Lower leg skin (tissue), 4 donors: ENCODE measurements at regions of chr7 and their contacts with region 1.

Region 1: DNA sequence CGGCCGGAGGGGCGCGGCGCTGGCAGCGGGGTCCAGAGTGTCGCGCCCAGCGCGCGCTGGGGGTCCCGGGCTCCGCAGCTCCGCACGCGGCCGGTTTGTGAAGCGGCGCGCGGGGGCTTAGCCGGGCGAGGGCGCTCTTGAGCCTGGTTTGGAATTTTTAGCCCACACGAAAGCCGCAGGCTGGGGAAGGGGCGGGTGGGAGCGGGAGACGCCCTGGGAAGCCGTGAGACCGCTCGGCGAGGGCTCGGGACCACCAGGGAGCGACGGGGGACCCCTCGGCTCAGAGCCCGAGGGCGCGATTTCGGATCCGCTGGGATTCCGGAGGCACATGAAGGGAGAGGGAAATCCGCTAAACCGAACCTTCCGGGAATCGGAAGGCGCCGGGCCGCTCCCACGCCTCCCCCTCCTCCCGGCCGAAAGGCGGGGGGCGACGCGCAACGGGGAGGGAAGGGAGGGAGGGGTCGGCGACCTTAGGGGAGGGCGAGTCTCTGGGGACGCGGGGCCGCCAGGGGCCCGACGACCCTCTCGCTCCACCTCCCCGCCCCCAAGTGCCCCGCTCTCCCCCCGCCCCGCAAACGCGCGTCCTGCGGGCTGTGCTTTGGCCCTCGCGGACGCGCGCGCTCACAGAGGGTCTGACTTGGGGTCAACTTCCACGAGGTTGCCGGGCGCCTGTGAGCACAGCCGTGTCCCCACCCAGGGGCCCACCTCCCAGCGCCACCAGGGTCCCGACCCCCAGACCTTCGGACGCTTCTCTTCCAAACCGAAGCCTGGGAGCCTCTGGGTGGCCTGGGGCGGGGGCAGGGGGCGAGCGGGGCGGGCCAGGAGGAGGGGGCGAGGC is 5.1 kb upstream of the ELFN1 start:
- DNase-seq: peak in 1 of 2 donors; percentile 92
- H3K4me3 ChIP-seq: no peak overlapping the region
- CTCF ChIP-seq: no peak
- POLR2A ChIP-seq: no peak

Region 2: DNA sequence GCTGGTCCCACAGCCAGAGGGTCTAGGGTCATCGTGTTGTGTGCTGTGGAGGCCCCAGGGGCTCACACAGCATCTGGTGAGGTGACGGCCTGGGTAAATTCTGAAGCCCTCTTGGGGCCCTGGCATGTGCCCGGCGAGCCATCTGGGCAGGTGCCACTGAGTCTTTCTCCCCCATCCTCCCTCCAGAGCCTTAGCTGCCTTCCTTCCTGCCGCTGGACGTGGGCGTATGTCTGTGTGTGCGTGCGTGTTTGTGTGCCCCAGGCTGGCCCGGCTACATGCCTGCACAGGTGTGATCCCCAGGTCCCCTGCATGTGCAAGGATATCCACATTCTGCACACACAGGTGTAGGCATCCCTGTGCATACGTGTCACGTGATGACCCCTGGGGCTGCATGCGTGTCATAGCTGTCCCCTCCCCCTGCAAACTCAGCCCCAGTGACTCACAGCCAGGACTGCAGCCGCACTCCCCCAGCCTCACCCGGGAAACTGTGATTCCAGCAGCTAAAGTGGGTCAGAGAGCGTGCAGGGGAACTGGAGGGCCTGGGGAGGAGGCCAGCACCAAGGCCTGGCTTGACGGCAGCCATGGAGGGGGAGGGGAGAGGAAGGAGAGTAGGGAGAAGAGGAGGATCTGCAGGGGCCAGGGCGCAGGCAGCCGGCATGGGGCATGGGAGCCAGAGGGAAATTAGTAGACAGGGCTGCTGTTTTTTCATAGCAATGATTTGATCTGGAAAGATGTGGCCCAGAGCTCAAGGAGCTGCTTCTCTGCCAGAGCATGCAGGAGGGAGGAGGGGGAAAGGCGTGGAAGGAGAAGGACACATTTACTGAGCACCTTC is 51.5 kb after region 1 on chr7:
- intact Hi-C with region 1: no loop called
- DNase-seq: no peak
- H3K4me3 ChIP-seq: no peak overlapping the region
- CTCF ChIP-seq: no peak
- POLR2A ChIP-seq: no peak

Region 3: GRCh38 chr7:2214636-2215035 is 549.7 kb after region 1 on chr7:
- intact Hi-C with region 1: loop called (anchors 10 kb)
- DNase-seq: no peak
- H3K4me3 ChIP-seq: no peak overlapping the region
- CTCF ChIP-seq: no peak
- POLR2A ChIP-seq: no peak

Region 4: DNA sequence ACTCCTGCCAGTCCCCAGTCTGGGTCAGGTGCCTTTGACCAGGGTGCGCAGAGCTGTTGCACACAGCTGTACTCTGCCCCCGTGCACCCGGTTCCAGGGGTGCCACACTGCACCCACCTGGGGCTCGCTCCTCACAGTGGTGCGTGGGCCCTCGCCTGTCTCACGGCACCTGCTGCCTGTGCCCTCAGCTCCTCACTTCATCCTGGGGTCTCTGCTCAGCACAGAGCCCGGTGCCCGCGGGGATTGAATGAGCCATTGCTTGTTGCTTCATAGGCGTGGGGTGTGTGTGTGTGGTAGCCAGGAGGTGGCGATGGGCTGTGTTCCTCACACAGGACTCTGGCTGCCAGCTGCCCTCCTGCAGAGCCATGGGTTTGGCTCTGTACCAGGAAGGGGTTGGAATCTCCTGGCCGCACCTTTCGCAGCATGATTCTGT is 708.2 kb after region 1 on chr7:
- intact Hi-C with region 1: no loop called
- DNase-seq: no peak
- H3K4me3 ChIP-seq: no peak overlapping the region
- CTCF ChIP-seq: no peak
- POLR2A ChIP-seq: no peak